ENCODE measurements at regions of chr1 and their contacts with region 1.

Region 1: DNA sequence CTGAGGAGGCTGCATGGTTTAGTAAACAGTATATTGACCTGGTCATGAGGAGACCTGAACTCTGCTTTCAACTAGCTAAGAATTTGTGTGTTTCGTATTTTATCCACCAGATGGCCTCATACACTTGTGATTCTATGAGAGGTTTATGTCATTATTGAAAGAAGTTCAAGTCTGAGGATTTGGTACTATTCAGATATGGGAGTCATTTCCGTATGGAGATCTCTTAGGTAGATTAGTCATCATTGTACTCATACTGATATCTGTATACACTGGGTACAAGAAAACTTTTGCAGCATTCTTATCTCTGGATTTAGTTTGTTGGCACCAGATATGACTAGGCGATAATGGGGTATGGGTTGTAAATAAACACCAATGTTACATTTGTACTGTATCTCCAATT is 26.6 kb downstream of the ATF6 start:
- DNase-seq: no peak
- H3K4me3 Mint-ChIP-seq: no peak overlapping the region
- H3K27ac Mint-ChIP-seq: peak overlapping the region; percentile 50
- H3K4me1 Mint-ChIP-seq: peaks cover 4% of the 10 kb centered on the region
- H3K27me3 Mint-ChIP-seq: no peaks in the 10 kb centered on the region

Region 2: GRCh38 chr1:161763522-161764098 is 29.1 kb before region 1 on chr1:
- CTCF ChIA-PET with region 1: interaction called, 18 read pairs
- DNase-seq: peak; percentile 64
- H3K4me3 Mint-ChIP-seq: peak overlapping the region; percentile 27
- H3K27ac Mint-ChIP-seq: peak overlapping the region; percentile 49
- H3K4me1 Mint-ChIP-seq: peaks cover 41% of the 10 kb centered on the region
- H3K27me3 Mint-ChIP-seq: no peaks in the 10 kb centered on the region

Region 3: GRCh38 chr1:161905269-161905884 is 112.6 kb after region 1 on chr1:
- CTCF ChIA-PET with region 1: interaction called, 27 read pairs
- DNase-seq: peak; percentile 47
- H3K4me3 Mint-ChIP-seq: no peak overlapping the region
- H3K27ac Mint-ChIP-seq: no peak overlapping the region
- H3K4me1 Mint-ChIP-seq: peaks cover 5% of the 10 kb centered on the region
- H3K27me3 Mint-ChIP-seq: no peaks in the 10 kb centered on the region

Region 4: GRCh38 chr1:162023547-162024501 is 231.1 kb after region 1 on chr1 and contains the start of gene OLFML2B:
- CTCF ChIA-PET with region 1: interaction called, 25 read pairs
- DNase-seq: peak; percentile 76
- H3K4me3 Mint-ChIP-seq: peak within 1 kb of the TSS; percentile 80
- H3K27ac Mint-ChIP-seq: no peak within 1 kb of the TSS
- H3K4me1 Mint-ChIP-seq: peaks cover 10% of the 10 kb centered on the region
- H3K27me3 Mint-ChIP-seq: peaks cover 52% of the 10 kb centered on the region

Region 5: DNA sequence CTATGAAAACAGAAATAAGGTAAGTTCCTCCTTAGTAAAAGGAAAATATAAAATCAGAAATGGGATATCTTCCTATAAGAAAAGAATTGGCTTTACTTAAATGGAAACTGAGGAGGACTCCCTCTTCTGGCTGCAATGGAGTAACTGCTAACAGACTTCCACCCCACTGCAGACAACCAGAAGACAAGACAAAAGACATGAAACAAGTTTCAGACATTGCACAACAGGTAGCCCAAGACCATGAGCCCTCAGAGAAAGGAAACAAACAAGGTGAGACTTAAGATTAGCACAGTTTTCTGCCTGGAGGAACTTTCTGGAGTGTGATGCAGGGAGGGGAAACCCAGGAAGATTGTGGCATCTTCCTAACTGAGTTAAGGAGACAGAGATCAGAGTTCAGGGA is 247.9 kb after region 1 on chr1:
- CTCF ChIA-PET with region 1: interaction called, 158 read pairs
- DNase-seq: no peak
- H3K4me3 Mint-ChIP-seq: no peak overlapping the region
- H3K27ac Mint-ChIP-seq: no peak overlapping the region
- H3K4me1 Mint-ChIP-seq: no peaks in the 10 kb centered on the region
- H3K27me3 Mint-ChIP-seq: peaks cover 14% of the 10 kb centered on the region